WTC11 (cell line): ENCODE measurements at regions of chr6 and their contacts with region 1.

Region 1: GRCh38 chr6:52305948-52306767 is 21.6 kb upstream of the MCM3 start:
- DNase-seq: no peak
- ATAC-seq: no peak
- H3K4me3 Mint-ChIP-seq: peak overlapping the region; percentile 82
- H3K27ac Mint-ChIP-seq: no peak overlapping the region
- H3K4me1 Mint-ChIP-seq: peaks cover 12% of the 10 kb centered on the region
- H3K27me3 Mint-ChIP-seq: no peaks in the 10 kb centered on the region; the same call in 1 of the 2 replicates
- CTCF ChIP-seq: no peak

Region 2: GRCh38 chr6:52377538-52378221 is 71.5 kb after region 1 on chr6:
- CTCF ChIA-PET with region 1: no interaction called
- POLR2A ChIA-PET with region 1: no interaction called
- DNase-seq: no peak
- ATAC-seq: no peak
- H3K4me3 Mint-ChIP-seq: no peak overlapping the region
- H3K27ac Mint-ChIP-seq: no peak overlapping the region
- H3K4me1 Mint-ChIP-seq: peaks cover 5% of the 10 kb centered on the region; the same call in 1 of the 2 replicates
- H3K27me3 Mint-ChIP-seq: no peaks in the 10 kb centered on the region
- CTCF ChIP-seq: no peak

Region 3: DNA sequence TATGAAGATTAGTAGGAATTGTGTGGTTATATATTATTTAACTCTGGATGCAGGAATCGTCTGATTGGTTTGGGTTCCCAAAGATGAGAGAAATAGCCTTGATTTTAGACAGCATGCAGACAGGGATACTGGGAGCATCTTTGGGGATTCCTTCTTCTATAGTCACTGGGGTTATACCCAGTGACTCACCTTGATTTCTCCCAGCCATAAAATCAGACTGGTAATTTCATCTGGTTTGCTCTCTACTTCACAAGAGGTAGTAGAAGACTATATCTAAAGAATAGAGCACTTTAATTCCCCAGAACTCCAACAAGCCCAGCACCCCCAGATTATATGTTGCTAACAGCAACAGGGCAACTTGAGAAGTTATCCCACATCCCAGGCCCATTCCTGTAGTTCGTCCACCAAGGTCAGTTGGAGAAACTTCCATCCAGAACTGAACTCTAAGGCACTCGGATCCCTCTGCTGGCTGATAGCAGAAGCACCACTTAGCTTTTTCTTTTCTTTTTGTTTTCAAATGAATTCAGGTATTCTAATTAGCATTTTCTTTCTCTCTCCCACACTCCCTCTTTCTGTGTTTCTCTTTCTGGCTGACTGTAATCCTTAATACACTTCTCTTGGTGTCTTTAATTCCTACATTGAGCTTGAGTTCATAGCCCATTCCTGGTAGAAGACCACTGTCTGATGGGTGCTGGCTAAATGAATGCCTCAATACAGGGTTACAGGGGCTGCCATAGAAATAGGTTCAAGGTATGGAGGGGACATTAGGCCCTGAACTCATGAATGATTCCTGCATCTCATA is 93.6 kb after region 1 on chr6:
- CTCF ChIA-PET with region 1: interaction called, 14 read pairs
- POLR2A ChIA-PET with region 1: no interaction called
- DNase-seq: peak; percentile 40
- ATAC-seq: peak; percentile 88
- H3K4me3 Mint-ChIP-seq: no peak overlapping the region
- H3K27ac Mint-ChIP-seq: peak overlapping the region; percentile 55; the same call in 1 of the 2 replicates
- H3K4me1 Mint-ChIP-seq: peaks cover 27% of the 10 kb centered on the region
- H3K27me3 Mint-ChIP-seq: no peaks in the 10 kb centered on the region
- CTCF ChIP-seq: peak; percentile 55

Region 4: GRCh38 chr6:52482903-52483670 is 176.9 kb after region 1 on chr6:
- CTCF ChIA-PET with region 1: no interaction called
- POLR2A ChIA-PET with region 1: no interaction called
- DNase-seq: no peak
- ATAC-seq: no peak
- H3K4me3 Mint-ChIP-seq: no peak overlapping the region
- H3K27ac Mint-ChIP-seq: no peak overlapping the region
- H3K4me1 Mint-ChIP-seq: peaks cover 3% of the 10 kb centered on the region
- H3K27me3 Mint-ChIP-seq: no peaks in the 10 kb centered on the region
- CTCF ChIP-seq: no peak